ENCODE measurements at regions of chr6 and their contacts with region 1.

Region 1: GRCh38 chr6:25490018-25490801 is 161.8 kb upstream of the SCGN start:
- DNase-seq: peak; percentile 30 to 76 (median 71)
- ATAC-seq: peak; percentile 90
- H3K4me3 ChIP-seq: no peak overlapping the region
- H3K4me3 Mint-ChIP-seq: peak overlapping the region in 1 of 10 donors; percentile 39
- H3K27ac ChIP-seq: no peak overlapping the region
- H3K27ac Mint-ChIP-seq: peak overlapping the region in 8 of 9 donors; percentile 8 to 94 (median 66)
- H3K4me1 ChIP-seq: no peaks in the 10 kb centered on the region
- H3K4me1 Mint-ChIP-seq: peaks cover 7 to 13% (median 9%) of the 10 kb centered on the region in 7 donors
- H3K27me3 ChIP-seq: no peaks in the 10 kb centered on the region
- H3K27me3 Mint-ChIP-seq: no peaks in the 10 kb centered on the region

Region 2: GRCh38 chr6:25263657-25264056 is 226.6 kb before region 1 on chr6:
- CTCF ChIA-PET with region 1: interaction called, 111 read pairs
- POLR2A ChIA-PET with region 1: interaction called, 5 read pairs
- intact Hi-C with region 1: loop called (anchors 1 kb)
- DNase-seq: no peak
- ATAC-seq: no peak
- H3K4me3 ChIP-seq: no peak overlapping the region
- H3K4me3 Mint-ChIP-seq: no peak overlapping the region
- H3K27ac ChIP-seq: no peak overlapping the region
- H3K27ac Mint-ChIP-seq: no peak overlapping the region
- H3K4me1 ChIP-seq: no peaks in the 10 kb centered on the region
- H3K4me1 Mint-ChIP-seq: peaks cover 0 to 4% (median 3%) of the 10 kb centered on the region in 7 donors
- H3K27me3 ChIP-seq: no peaks in the 10 kb centered on the region
- H3K27me3 Mint-ChIP-seq: peaks cover 0 to 25% (median 3%) of the 10 kb centered on the region in 5 donors

Region 3: GRCh38 chr6:25278914-25279747 is 211.1 kb before region 1 on chr6 and contains the start of gene CARMIL1:
- CTCF ChIA-PET with region 1: interaction called, 77 read pairs
- POLR2A ChIA-PET with region 1: interaction called, 22 read pairs
- intact Hi-C with region 1: loop called (anchors 1 kb)
- DNase-seq: peak; percentile 46 to 76 (median 70)
- ATAC-seq: peak; percentile 84
- H3K4me3 ChIP-seq: peak within 1 kb of the TSS; percentile 64
- H3K4me3 Mint-ChIP-seq: peak within 1 kb of the TSS; percentile 88 to 98 (median 94)
- H3K27ac ChIP-seq: peak within 1 kb of the TSS; percentile 77
- H3K27ac Mint-ChIP-seq: peak within 1 kb of the TSS; percentile 74 to 94 (median 90)
- H3K4me1 ChIP-seq: peaks cover 14 to 15% of the 10 kb centered on the region in 2 donors
- H3K4me1 Mint-ChIP-seq: peaks cover 19 to 62% (median 41%) of the 10 kb centered on the region in 7 donors
- H3K27me3 ChIP-seq: no peaks in the 10 kb centered on the region
- H3K27me3 Mint-ChIP-seq: peaks cover 0 to 16% (median 6%) of the 10 kb centered on the region in 5 donors
- total RNA-seq, gene CARMIL1: 3.3 to 12.8 (median 10.4) TPM

Region 4: DNA sequence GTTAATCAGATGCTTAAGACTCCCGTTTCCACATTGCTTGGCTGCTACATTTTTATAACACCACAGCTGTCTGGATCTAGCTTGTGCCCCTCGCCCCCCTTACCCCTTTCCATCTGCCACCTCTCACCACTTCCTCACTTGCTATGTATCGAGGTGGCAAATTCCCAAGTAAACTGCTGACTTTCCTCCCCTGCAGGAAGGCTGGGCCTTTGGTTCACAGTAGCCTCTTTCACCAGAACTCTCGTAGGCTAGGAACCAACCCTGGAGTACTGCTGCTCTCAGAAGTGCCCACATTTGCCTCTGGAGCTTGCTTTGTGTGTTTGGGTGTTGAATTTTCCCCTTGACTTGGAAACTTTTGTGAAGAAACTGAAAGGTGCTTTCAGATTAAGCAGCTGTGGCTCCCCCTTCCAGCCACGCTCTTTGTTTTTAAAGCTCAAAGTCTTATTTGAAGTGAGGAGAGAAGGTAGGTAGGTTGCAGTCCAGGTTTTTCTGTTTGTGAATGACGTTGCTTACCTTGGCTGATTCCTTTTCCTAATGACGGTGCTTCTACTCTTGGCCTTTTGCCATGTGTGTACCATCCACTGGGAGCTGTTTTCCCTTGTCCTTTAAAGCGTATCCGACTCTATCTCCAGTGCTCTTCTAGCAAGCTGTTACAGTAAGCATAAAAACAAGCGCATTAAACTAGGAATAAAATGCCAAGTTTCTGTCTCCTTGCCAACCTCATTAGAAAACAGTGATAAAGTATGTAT is 120.6 kb before region 1 on chr6:
- CTCF ChIA-PET with region 1: interaction called, 19 read pairs
- POLR2A ChIA-PET with region 1: interaction called, 8 read pairs
- intact Hi-C with region 1: loop called in 1 of 2 experiments (anchors 1 kb)
- DNase-seq: peak in 8 of 9 donors; percentile 34 to 67 (median 50)
- ATAC-seq: peak; percentile 52
- H3K4me3 ChIP-seq: peak overlapping the region; percentile 14
- H3K4me3 Mint-ChIP-seq: peak overlapping the region; percentile 79 to 97 (median 91)
- H3K27ac ChIP-seq: peak overlapping the region; percentile 80
- H3K27ac Mint-ChIP-seq: peak overlapping the region; percentile 82 to 100 (median 99)
- H3K4me1 ChIP-seq: peaks cover 18 to 46% of the 10 kb centered on the region in 2 donors
- H3K4me1 Mint-ChIP-seq: peaks cover 43 to 100% (median 96%) of the 10 kb centered on the region in 7 donors
- H3K27me3 ChIP-seq: no peaks in the 10 kb centered on the region
- H3K27me3 Mint-ChIP-seq: no peaks in the 10 kb centered on the region

Region 5: DNA sequence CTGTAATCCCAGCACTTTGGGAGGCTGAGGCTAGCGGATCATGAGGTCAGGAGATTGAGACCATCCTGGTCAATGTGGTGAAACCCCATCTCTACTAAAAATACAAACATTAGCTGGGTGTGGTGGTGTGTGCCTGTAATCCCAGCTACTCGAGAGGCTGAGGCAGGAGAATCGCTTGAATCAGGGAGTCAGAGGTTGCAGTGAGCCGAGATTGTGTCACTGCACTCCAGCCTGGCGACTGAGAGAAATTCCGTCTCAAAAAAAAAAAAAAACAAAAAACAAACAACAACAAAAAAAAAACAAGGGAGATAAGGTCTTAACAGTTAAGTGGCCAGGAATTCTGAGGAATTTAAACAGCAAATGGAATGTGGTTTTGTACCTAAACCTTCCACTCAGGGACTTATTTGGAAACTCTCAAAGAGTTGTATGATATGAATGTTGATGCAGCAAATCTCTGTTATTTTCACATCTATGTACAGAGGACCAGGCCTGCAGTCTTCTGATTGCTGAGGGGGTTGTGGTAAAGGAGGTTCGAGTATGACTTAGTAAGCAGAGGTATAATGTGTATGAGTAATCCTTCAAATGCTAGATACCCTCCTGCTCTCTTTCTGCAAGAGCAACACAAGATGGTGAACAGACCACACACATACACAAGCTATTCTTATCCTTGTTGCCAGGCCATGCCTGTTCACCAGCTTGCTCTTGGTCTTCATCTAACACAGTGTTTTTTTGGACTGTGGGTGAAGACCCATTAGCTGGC is 13.2 kb before region 1 on chr6:
- CTCF ChIA-PET with region 1: interaction called, 13 read pairs
- POLR2A ChIA-PET with region 1: no interaction called
- intact Hi-C with region 1: no loop called
- DNase-seq: no peak
- ATAC-seq: no peak
- H3K4me3 ChIP-seq: no peak overlapping the region
- H3K4me3 Mint-ChIP-seq: no peak overlapping the region
- H3K27ac ChIP-seq: no peak overlapping the region
- H3K27ac Mint-ChIP-seq: peak overlapping the region in 2 of 9 donors; percentile 6 to 32
- H3K4me1 ChIP-seq: no peaks in the 10 kb centered on the region
- H3K4me1 Mint-ChIP-seq: peaks cover 0 to 10% (median 0%) of the 10 kb centered on the region in 7 donors
- H3K27me3 ChIP-seq: no peaks in the 10 kb centered on the region
- H3K27me3 Mint-ChIP-seq: no peaks in the 10 kb centered on the region

Region 6: DNA sequence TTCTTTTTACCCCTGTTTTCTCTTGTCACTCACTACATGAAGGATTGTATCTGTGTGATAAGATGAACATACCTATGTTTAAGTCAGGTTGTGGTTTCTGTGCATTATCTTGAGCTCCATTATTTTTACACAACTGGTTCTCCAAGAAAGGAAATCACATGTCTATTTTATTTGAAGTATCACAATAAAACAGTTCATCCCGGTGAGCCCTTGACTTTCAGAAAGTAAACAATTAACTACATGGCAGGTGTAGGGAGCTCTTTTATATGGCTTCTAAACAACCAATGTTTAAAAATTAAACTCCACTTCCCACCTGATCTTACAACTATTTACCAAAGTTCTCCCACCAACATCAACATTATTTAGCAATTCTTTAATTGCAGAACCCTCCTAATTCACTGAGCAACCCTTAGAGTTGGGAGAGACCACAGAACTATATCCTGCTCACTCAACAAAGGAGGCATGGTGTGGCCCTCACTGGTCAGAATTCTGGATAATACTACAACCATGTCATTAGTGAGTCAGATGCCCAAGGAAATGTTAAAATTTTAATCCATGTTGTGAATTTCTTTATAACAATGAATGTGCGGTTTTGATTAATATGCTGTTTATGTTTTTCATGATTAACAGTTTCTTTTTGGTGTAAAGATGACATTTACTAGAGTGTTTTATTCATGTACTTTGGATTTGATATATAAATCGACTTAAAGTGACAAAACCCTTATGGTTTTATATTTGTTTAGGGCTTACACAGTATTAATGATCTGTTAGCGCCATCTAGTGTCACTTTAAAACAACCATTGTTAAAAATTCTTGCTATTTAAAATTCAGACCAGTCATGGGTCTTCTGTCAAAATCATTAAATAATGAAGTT is 111.8 kb after region 1 on chr6:
- CTCF ChIA-PET with region 1: interaction called, 4 read pairs
- POLR2A ChIA-PET with region 1: no interaction called
- intact Hi-C with region 1: loop called (anchors 1 kb)
- DNase-seq: peak in 6 of 9 donors; percentile 3 to 48 (median 35)
- ATAC-seq: peak; percentile 64
- H3K4me3 ChIP-seq: no peak overlapping the region
- H3K4me3 Mint-ChIP-seq: no peak overlapping the region
- H3K27ac ChIP-seq: no peak overlapping the region
- H3K27ac Mint-ChIP-seq: peak overlapping the region in 2 of 9 donors; percentile 17 to 18
- H3K4me1 ChIP-seq: no peaks in the 10 kb centered on the region
- H3K4me1 Mint-ChIP-seq: peaks cover 0 to 19% (median 9%) of the 10 kb centered on the region in 7 donors
- H3K27me3 ChIP-seq: no peaks in the 10 kb centered on the region
- H3K27me3 Mint-ChIP-seq: no peaks in the 10 kb centered on the region

Measured in naive thymus-derived CD4-positive, alpha-beta T cell (primary cell).